ENCODE measurements at regions of chr5 and their contacts with region 1.

Region 1: DNA sequence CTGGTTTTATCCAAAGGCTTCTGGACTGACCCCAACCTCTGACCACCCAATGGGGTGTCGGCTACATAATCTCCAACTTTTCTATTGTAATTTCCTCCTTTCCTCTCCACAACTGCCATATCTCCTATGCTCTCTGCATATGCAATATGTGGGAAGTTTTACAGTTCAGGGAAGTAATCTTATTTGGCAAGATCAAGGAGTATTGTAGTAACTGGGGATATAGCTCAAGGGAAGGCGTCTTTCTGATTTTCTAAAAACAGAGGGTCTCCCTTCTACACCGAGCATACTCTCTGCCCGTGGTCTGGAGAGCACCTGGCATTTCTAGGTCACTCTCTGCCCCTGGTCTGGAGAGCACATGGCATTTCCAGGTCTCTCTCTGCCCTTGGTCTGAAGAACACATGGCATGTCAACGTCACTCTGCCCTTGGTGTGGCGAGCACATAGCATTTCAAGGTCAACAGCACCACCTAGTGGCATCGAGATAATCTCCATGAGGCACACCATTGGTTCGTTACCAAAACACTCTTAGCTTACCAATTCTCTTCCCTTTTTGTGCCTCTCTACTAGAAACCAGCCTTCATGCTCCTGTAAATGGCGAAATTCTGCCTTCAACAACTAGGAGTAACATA is 616.4 kb upstream of the NUDT12 start:
- DNase-seq: peak in 6 of 10 donors; percentile 14 to 78 (median 37)

Region 2: DNA sequence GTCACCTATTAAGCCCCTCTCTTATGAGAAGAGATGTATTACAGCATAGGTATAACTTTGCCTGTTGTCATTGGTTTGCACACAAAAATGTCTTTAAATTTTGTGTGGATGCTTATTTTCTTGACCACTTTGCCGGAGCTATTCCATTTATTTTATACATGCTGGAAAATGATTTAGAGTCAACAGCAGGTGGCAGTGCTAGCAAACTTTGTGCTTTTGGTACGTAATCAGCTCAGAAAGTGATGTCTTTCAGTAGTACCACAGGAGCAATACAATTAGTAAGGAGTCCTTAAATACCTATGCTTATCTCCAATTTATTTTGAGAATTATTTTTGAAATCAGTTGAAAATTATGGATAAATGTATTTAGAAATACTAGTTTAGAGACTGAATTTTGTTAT is 596.6 kb before region 1 on chr5:
- intact Hi-C with region 1: loop called (anchors 1 kb)
- DNase-seq: peak in 4 of 10 donors; percentile 32 to 49 (median 38)

Region 3: DNA sequence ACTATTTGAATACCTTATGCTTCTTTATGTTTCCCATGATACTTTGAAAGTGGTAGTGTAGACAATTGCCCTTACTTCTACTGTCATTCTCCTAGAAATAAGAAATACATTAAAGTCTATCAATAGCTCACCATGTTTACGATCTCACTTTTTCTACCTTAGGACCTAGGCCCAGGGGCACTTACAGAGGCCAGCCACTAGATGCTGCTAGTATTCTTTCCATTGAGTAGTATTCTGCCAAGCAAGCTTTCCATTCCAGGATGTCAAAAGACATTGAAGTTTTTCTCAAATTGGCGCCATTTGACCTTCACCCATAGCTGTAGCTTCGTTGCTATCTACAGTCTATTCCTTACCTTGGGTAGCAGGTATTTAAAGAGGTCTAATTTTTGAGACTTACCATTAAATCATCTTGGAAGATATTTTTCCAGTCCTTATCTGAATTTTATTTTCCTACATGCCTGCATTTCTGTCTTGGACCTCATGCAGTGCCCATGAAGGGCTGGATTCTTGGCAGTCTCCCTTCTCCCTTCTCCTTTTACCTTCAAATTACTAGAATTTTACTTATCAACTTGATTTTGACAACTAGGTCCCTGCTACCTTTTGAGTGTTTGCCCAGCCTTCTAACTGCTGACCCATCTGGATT is 370.4 kb before region 1 on chr5:
- intact Hi-C with region 1: loop called (anchors 1 kb)
- DNase-seq: peak in 5 of 10 donors; percentile 18 to 53 (median 35)

Region 4: GRCh38 chr5:103889517-103890209 is 289.3 kb before region 1 on chr5:
- intact Hi-C with region 1: loop called (anchors 10 kb)
- DNase-seq: no peak

Measured in posterior cingulate gyrus (tissue), 11 donors.